Ascending aorta (tissue), 2 donors: ENCODE measurements at regions of chrX and their contacts with region 1.

Region 1: GRCh38 chrX:81377329-81377728 is 175.4 kb downstream of the SH3BGRL start:
- DNase-seq: no peak
- H3K4me3 ChIP-seq: no peak overlapping the region
- H3K27ac ChIP-seq: no peak overlapping the region
- H3K4me1 ChIP-seq: no peaks in the 10 kb centered on the region
- H3K27me3 ChIP-seq: no peaks in the 10 kb centered on the region
- CTCF ChIP-seq: peak in 2 of 3 experiments; percentile 52 to 55

Region 2: GRCh38 chrX:81174286-81174685 is 203.0 kb before region 1 on chrX:
- intact Hi-C with region 1: loop called (anchors 1 kb)
- DNase-seq: no peak
- H3K4me3 ChIP-seq: no peak overlapping the region
- H3K27ac ChIP-seq: no peak overlapping the region
- H3K4me1 ChIP-seq: no peaks in the 10 kb centered on the region
- H3K27me3 ChIP-seq: no peaks in the 10 kb centered on the region
- CTCF ChIP-seq: no peak

Region 3: DNA sequence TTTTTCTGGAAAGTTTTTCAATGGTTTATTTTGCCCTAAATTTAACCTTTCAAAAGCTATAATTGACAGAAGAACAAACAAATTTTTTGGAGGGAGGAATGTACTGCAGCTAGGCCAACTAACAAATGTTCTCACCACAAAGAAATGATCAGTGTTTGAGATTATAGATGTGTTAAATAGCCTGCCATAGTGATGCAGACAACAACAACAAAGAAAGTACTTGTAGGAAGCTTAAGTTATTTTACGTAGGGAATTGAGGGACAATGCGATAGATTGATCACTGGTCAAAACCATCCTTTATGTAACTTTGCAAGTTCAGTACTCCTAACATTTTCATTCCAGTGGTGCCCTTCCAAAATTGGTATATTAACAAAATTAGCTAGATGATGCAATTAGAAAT is 164.9 kb after region 1 on chrX:
- intact Hi-C with region 1: no loop called
- DNase-seq: no peak
- H3K4me3 ChIP-seq: no peak overlapping the region
- H3K27ac ChIP-seq: no peak overlapping the region
- H3K4me1 ChIP-seq: no peaks in the 10 kb centered on the region
- H3K27me3 ChIP-seq: no peaks in the 10 kb centered on the region
- CTCF ChIP-seq: no peak